ENCODE measurements at regions of chr6 and their contacts with region 1.

Region 1: DNA sequence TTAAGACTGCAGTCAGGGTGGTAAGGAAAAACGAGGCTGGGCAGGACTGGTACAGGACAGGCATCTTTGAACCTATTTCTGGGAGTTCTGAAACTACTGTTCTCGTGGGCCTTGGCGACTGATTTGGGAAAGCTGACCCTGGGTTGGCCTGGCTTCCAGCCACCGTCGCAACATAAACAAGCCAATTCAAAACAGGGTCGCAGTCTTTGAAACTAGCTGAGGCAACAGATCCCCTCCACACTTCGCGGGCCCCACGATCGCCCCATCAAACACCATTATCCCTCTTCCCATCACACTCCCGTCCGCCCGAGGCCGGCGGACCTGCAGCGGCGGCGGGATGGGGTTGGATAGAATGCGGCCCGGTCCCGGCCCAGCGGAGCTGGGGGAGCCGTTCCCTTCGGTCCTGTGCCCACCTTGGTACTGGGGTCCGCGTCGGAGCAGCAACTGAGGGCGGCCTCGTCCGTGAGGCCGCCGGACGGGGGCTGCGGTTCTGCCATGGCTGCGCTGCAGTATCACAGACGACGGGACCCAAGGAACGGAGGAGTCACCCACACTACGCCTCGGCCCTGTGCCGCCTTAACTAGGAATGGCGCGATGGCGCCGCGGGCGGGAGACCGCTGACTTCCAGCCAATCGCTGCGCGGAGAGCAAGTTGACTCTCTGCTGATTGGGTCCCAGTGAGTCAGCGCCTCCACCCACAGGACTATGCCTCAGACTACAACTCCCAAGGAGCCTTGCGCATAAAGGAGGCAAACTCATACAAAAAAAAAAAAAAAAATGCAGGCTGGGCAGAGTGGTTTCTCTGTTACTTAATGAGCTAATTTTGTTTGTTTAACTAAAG is at the start of gene GLO1:
- DNase-seq: peak; percentile 94 to 98 (median 95)
- H3K4me3 ChIP-seq: peak within 1 kb of the TSS; percentile 56 to 91
- H3K4me3 Mint-ChIP-seq: peak within 1 kb of the TSS; percentile 83 to 96 (median 88)
- H3K27ac ChIP-seq: peak within 1 kb of the TSS; percentile 85
- H3K27ac Mint-ChIP-seq: peak within 1 kb of the TSS; percentile 83 to 98 (median 92)
- H3K4me1 ChIP-seq: peaks cover 11% of the 10 kb centered on the region
- H3K4me1 Mint-ChIP-seq: peaks cover 21 to 38% (median 27%) of the 10 kb centered on the region in 4 donors
- H3K27me3 ChIP-seq: no peaks in the 10 kb centered on the region
- H3K27me3 Mint-ChIP-seq: peaks cover 3 to 7% of the 10 kb centered on the region in 2 donors
- total RNA-seq, gene GLO1: 28.3 to 28.7 TPM

Region 2: DNA sequence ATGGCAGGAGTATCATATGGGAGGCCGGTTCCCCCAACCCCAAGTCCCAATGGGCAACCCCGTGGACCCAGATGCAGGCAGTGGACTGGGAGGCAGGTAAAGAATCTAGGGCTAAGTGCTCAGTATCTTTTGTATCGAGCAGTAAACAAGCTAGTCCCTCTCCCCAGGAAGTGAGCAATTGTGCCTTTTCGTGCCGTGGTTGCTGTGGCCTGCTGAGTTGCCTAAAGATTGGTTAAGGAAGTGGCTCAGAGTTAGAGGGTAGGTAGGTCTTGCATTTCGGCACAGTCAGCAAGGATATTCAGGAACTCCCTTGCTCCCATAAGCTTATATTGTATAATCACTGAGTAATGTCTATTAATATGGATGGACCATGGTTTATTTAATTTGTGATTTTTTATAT is 11.0 kb after region 1 on chr6:
- CTCF ChIA-PET with region 1: interaction called, 7 read pairs
- POLR2A ChIA-PET with region 1: interaction called, 38 read pairs
- intact Hi-C with region 1: loop called (anchors 1 kb)
- DNase-seq: peak; percentile 39 to 66 (median 45)
- H3K4me3 ChIP-seq: no peak overlapping the region
- H3K4me3 Mint-ChIP-seq: peak overlapping the region in 6 of 8 donors; percentile 21 to 72 (median 55)
- H3K27ac ChIP-seq: no peak overlapping the region
- H3K27ac Mint-ChIP-seq: peak overlapping the region; percentile 10 to 90 (median 79)
- H3K4me1 ChIP-seq: peaks cover 24% of the 10 kb centered on the region
- H3K4me1 Mint-ChIP-seq: peaks cover 14 to 23% (median 17%) of the 10 kb centered on the region in 4 donors
- H3K27me3 ChIP-seq: no peaks in the 10 kb centered on the region
- H3K27me3 Mint-ChIP-seq: peaks cover 16 to 18% of the 10 kb centered on the region in 2 donors

Region 3: GRCh38 chr6:38824243-38824894 is 121.6 kb after region 1 on chr6:
- CTCF ChIA-PET with region 1: no interaction called
- POLR2A ChIA-PET with region 1: no interaction called
- intact Hi-C with region 1: no loop called
- DNase-seq: peak in 1 of 5 donors; percentile 0
- H3K4me3 ChIP-seq: no peak overlapping the region
- H3K4me3 Mint-ChIP-seq: no peak overlapping the region
- H3K27ac ChIP-seq: no peak overlapping the region
- H3K27ac Mint-ChIP-seq: no peak overlapping the region
- H3K4me1 ChIP-seq: no peaks in the 10 kb centered on the region
- H3K4me1 Mint-ChIP-seq: no peaks in the 10 kb centered on the region
- H3K27me3 ChIP-seq: no peaks in the 10 kb centered on the region
- H3K27me3 Mint-ChIP-seq: peaks cover 10 to 11% of the 10 kb centered on the region in 2 donors

Measured in CD4-positive, alpha-beta memory T cell (primary cell).